Panc1 (cell line): ENCODE measurements at regions of chr7 and their contacts with region 1.

Region 1: GRCh38 chr7:16655394-16655793 is 9.4 kb downstream of the BZW2 start:
- DNase-seq: no peak
- ATAC-seq: no peak
- H3K4me3 ChIP-seq: no peak overlapping the region
- H3K27ac ChIP-seq: no peak overlapping the region
- H3K4me1 ChIP-seq: peaks cover 13% of the 10 kb centered on the region
- H3K27me3 ChIP-seq: no peaks in the 10 kb centered on the region
- CTCF ChIP-seq: no peak

Region 2: GRCh38 chr7:16678045-16678444 is 22.7 kb after region 1 on chr7:
- CTCF ChIA-PET with region 1: no interaction called
- POLR2A ChIA-PET with region 1: interaction called, 12 read pairs
- in situ Hi-C with region 1: no loop called
- intact Hi-C with region 1: no loop called
- DNase-seq: no peak
- ATAC-seq: no peak
- H3K4me3 ChIP-seq: no peak overlapping the region
- H3K27ac ChIP-seq: no peak overlapping the region
- H3K4me1 ChIP-seq: no peaks in the 10 kb centered on the region
- H3K27me3 ChIP-seq: no peaks in the 10 kb centered on the region
- CTCF ChIP-seq: no peak

Region 3: DNA sequence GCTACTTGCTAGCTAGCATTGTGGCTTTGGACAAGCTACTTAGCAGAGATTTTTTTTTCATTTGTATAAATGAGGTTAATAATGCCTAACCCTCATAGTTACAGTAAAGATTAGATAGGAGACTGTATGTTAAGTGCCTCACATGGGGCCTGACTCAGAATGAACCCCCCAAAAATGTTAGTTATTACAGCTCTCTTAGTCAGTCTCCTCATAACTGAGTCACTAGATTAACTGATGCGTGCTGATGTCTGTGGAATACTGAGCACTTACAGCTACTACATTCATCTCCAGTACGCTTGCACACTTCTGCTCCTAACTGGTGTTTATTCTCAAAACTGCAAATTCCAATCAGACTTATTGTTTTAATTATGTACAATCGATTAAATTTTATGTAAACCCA is 969.6 kb after region 1 on chr7:
- CTCF ChIA-PET with region 1: no interaction called
- POLR2A ChIA-PET with region 1: no interaction called
- in situ Hi-C with region 1: no loop called
- intact Hi-C with region 1: no loop called
- DNase-seq: no peak
- ATAC-seq: peak; percentile 79
- H3K4me3 ChIP-seq: no peak overlapping the region
- H3K27ac ChIP-seq: peak overlapping the region; percentile 29; the same call in 1 of the 2 replicates
- H3K4me1 ChIP-seq: peaks cover 10% of the 10 kb centered on the region; the same call in 1 of the 2 replicates
- H3K27me3 ChIP-seq: no peaks in the 10 kb centered on the region
- CTCF ChIP-seq: no peak